ENCODE measurements at regions of chr1 and their contacts with region 1.

Region 1: GRCh38 chr1:240611619-240612480 is at the start of gene GREM2:
- DNase-seq: peak; percentile 72
- H3K4me3 Mint-ChIP-seq: peak within 1 kb of the TSS; percentile 90
- H3K27ac Mint-ChIP-seq: peak within 1 kb of the TSS; percentile 69
- H3K4me1 Mint-ChIP-seq: peaks cover 30% of the 10 kb centered on the region
- H3K27me3 Mint-ChIP-seq: peaks cover 42% of the 10 kb centered on the region
- total RNA-seq, gene GREM2: 0.17 to 0.25 TPM

Region 2: GRCh38 chr1:239719642-239720258 is 892.1 kb before region 1 on chr1:
- CTCF ChIA-PET with region 1: no interaction called
- intact Hi-C with region 1: loop called (anchors 10 kb)
- DNase-seq: peak; percentile 74
- H3K4me3 Mint-ChIP-seq: peak overlapping the region; percentile 91
- H3K27ac Mint-ChIP-seq: peak overlapping the region; percentile 97
- H3K4me1 Mint-ChIP-seq: peaks cover 41% of the 10 kb centered on the region
- H3K27me3 Mint-ChIP-seq: no peaks in the 10 kb centered on the region

Region 3: DNA sequence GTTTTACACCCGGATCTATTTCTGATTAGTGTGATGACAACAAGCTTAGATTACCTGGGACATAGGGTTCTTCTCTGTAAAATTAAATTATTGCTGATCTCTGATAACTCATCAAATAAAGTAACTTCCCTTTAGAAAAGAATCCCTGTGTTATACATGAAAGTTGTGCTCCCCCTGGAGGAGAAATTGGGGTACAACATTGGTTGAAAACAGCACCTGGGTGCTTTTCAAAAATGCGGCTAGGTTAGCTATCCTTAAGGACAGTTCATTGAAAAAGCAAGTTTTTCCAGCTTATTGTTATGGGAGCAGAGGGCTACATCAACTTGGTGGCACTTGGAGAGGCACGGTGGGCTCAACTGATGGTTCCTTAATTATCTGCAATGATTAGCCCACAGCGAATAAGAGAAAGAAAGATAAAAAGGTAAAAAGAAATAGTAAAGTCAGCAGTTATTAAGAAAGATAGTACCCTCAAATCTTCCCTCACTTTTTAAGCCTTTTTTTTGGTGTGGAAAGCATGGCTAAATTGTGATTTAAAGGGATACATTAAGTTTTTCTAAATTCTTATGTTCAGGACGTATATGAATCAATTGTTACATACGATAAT is 422.4 kb before region 1 on chr1:
- CTCF ChIA-PET with region 1: interaction called, 3 read pairs
- intact Hi-C with region 1: loop called (anchors 2 kb)
- DNase-seq: peak; percentile 44
- H3K4me3 Mint-ChIP-seq: no peak overlapping the region
- H3K27ac Mint-ChIP-seq: no peak overlapping the region
- H3K4me1 Mint-ChIP-seq: peaks cover 2% of the 10 kb centered on the region
- H3K27me3 Mint-ChIP-seq: peaks cover 21% of the 10 kb centered on the region

Region 4: DNA sequence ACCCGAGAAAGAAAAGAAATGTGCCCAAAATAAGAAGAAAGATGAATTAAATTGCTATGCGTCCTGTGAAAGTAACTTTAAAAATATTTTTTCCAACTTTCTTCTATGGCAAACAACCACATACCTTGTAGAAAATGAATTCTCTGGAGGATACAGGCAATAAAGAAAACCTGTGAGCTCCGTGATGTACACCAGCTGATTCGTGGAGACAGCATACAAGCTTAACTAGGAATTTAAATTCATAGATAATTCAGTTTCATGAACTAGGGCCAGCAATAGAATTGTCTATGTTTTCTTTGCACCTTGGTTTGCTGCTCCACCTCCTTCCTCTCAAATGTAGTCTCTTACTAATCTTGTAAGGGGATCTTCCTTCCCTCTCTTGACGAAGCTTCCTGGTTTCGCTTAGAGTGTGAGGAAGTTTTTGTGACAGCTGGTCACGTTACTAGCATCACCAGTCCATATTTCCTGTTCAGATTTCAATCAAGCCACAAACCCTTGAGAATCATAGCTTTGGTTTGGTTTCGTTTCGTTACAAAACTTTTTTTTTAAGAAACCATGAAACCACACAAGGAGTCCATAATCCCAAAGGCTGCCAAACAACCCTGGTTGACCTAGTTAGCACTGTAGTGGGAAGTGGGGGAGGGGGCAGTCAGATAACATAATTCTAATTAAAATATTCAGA is 35.7 kb before region 1 on chr1:
- CTCF ChIA-PET with region 1: no interaction called
- intact Hi-C with region 1: loop called (anchors 1 kb)
- DNase-seq: peak; percentile 34
- H3K4me3 Mint-ChIP-seq: peak overlapping the region; percentile 36
- H3K27ac Mint-ChIP-seq: no peak overlapping the region
- H3K4me1 Mint-ChIP-seq: peaks cover 13% of the 10 kb centered on the region
- H3K27me3 Mint-ChIP-seq: no peaks in the 10 kb centered on the region

Region 5: DNA sequence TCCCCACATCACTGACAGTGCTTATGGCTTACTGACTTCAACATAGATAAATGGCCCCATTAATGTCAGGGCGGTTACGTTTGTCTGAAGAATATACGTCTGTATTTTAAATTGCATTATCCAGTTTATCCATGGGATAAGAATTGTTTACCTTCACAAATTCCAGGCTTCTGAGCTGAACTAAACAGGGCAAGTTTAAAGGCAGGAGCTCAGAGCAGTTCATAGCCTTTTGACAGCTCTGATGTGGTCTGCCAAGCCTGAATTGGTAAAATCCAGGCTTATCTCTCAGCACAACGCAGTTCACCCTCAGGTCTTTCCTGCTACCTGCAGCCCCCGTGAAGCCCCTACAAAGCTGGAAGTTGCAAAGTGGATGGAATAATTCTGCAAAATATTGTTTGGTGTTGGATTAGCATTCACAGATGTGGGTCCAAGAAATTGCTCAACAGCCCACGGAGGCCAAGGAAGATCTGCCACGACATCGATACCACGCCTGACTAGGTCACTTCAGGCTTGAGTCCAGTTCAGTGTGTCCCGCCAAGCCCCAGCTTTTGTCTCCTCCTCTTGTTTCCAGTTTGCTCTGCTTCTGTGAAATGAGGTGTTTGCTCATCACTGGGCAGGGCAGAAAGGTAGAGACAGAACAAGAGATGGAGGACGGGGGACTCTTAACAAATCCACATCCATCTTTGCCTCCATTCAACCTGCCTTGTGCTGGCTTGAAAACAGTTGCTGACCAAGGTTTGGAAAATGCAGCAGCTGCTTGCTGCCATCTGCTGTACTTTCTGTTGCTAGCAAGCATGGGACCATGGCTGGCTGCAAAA is 79.9 kb after region 1 on chr1:
- CTCF ChIA-PET with region 1: no interaction called
- intact Hi-C with region 1: loop called (anchors 1 kb)
- DNase-seq: peak; percentile 30
- H3K4me3 Mint-ChIP-seq: no peak overlapping the region
- H3K27ac Mint-ChIP-seq: no peak overlapping the region
- H3K4me1 Mint-ChIP-seq: peaks cover 9% of the 10 kb centered on the region
- H3K27me3 Mint-ChIP-seq: no peaks in the 10 kb centered on the region

Region 6: DNA sequence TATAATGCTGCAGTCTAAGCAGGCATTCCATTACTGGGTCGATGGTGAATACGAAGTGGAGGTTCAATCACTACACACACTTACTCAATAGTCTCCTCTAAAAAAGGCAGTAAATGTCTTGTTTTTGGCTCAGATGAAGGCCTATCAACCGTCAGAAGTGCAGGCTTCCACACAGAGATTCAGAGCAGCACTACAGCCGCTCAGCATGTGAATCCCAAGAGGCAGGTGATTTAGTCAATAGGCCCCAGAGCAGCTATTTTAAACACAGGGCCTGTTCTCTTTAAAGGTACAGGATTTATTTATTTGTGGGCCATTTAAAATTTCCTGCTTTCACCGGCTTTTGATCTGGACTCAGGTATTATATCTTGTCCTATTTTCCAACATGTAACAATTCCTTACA is 451.4 kb after region 1 on chr1:
- CTCF ChIA-PET with region 1: no interaction called
- intact Hi-C with region 1: no loop called
- DNase-seq: no peak
- H3K4me3 Mint-ChIP-seq: no peak overlapping the region
- H3K27ac Mint-ChIP-seq: no peak overlapping the region
- H3K4me1 Mint-ChIP-seq: no peaks in the 10 kb centered on the region
- H3K27me3 Mint-ChIP-seq: peaks cover 2% of the 10 kb centered on the region

Measured in activated naive CD4-positive, alpha-beta T cell treated with anti-CD3 and anti-CD28 coated beads for 36 hours (primary cell).